Endothelial cell of umbilical vein (primary cell): ENCODE measurements at regions of chr6 and their contacts with region 1.

Region 1: DNA sequence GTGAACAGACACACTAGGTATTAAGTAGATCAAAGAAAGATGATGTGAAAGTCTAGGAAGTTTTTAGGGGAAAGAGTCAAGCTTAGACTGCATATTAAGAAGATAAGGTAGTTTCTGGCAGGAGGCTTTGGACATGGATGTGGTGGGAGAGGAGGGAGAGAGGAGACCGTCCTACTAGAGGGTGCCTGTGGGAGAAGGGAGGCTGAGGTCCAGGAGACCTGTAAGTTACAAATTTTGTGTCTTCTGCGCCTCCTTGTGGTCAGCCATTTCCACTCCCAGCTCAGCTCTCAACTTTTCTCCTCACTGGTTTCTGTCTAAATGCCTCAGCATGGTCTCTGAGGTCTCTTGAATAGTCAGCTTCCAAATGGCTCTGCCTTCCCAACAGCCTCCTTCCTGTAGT is 193.5 kb downstream of the UNC5CL start:
- DNase-seq: peak; percentile 45
- H3K4me3 ChIP-seq: no peak overlapping the region
- H3K27ac ChIP-seq: no peak overlapping the region
- H3K4me1 ChIP-seq: no peaks in the 10 kb centered on the region
- H3K27me3 ChIP-seq: peaks cover 4 to 7% of the 10 kb centered on the region in 2 experiments
- CTCF ChIP-seq: peak; percentile 41 to 72
- POLR2A ChIP-seq: no peak

Region 2: GRCh38 chr6:39347906-39348585 is 1497.5 kb before region 1 on chr6:
- CTCF ChIA-PET with region 1: interaction called, 3 read pairs
- POLR2A ChIA-PET with region 1: no interaction called
- dilution Hi-C with region 1: no loop called
- intact Hi-C with region 1: loop called (anchors 10 kb)
- DNase-seq: peak; percentile 56
- H3K4me3 ChIP-seq: no peak overlapping the region
- H3K27ac ChIP-seq: no peak overlapping the region
- H3K4me1 ChIP-seq: no peaks in the 10 kb centered on the region
- H3K27me3 ChIP-seq: no peaks in the 10 kb centered on the region
- CTCF ChIP-seq: peak; percentile 78 to 87
- POLR2A ChIP-seq: no peak

Region 3: DNA sequence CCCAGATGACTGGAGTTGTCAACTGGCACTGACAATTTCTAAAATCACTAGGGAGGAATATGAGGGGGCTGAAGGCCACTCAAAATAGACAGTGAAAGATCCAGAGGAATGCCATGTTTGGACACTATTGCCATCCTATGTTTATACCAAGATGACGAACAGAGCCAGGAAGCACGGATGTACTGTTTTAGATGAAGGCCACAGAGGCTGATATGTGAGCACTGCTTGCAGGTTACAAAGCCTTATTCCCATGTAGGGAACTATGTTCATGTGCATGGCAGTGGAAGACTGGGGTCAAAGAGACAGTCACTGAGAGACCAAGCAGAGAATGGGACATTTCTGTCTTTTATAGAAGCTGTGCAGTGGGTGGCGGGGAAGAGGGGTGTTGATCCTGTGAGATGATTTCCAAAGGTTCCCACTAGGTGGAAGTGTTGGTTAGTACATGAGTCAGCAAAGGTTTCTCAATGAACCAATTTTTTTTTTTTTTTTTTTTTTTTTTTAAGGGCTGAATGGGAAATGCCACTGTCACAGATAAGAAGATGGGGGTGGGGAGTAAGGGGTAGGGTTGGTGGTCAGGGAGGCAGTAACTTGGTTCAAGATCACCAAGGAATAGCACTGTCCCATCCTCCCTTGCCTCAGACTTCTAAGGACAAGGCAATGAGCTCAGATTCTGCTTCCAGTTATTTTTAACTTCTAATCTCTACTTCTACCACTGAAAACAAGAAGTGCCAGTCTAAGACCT is 864.5 kb before region 1 on chr6:
- CTCF ChIA-PET with region 1: interaction called, 10 read pairs
- POLR2A ChIA-PET with region 1: no interaction called
- dilution Hi-C with region 1: no loop called
- intact Hi-C with region 1: loop called (anchors 1 kb)
- DNase-seq: peak; percentile 30
- H3K4me3 ChIP-seq: no peak overlapping the region
- H3K27ac ChIP-seq: no peak overlapping the region
- H3K4me1 ChIP-seq: no peaks in the 10 kb centered on the region
- H3K27me3 ChIP-seq: no peaks in the 10 kb centered on the region
- CTCF ChIP-seq: peak in 1 of 2 donors; percentile 24
- POLR2A ChIP-seq: no peak

Region 4: GRCh38 chr6:40550202-40551101 is 295.1 kb before region 1 on chr6:
- CTCF ChIA-PET with region 1: interaction called, 19 read pairs
- POLR2A ChIA-PET with region 1: no interaction called
- dilution Hi-C with region 1: no loop called
- intact Hi-C with region 1: loop called (anchors 1 kb)
- DNase-seq: peak; percentile 46
- H3K4me3 ChIP-seq: no peak overlapping the region
- H3K27ac ChIP-seq: no peak overlapping the region
- H3K4me1 ChIP-seq: no peaks in the 10 kb centered on the region
- H3K27me3 ChIP-seq: no peaks in the 10 kb centered on the region
- CTCF ChIP-seq: peak; percentile 56 to 70
- POLR2A ChIP-seq: no peak

Region 5: GRCh38 chr6:40713001-40713960 is 132.3 kb before region 1 on chr6:
- CTCF ChIA-PET with region 1: interaction called, 12 read pairs
- POLR2A ChIA-PET with region 1: no interaction called
- dilution Hi-C with region 1: no loop called
- intact Hi-C with region 1: no loop called
- DNase-seq: no peak
- H3K4me3 ChIP-seq: no peak overlapping the region
- H3K27ac ChIP-seq: no peak overlapping the region
- H3K4me1 ChIP-seq: no peaks in the 10 kb centered on the region
- H3K27me3 ChIP-seq: no peaks in the 10 kb centered on the region
- CTCF ChIP-seq: peak in 1 of 2 donors; percentile 16
- POLR2A ChIP-seq: no peak

Region 6: GRCh38 chr6:40807484-40807883 is 38.1 kb before region 1 on chr6:
- CTCF ChIA-PET with region 1: no interaction called
- POLR2A ChIA-PET with region 1: no interaction called
- dilution Hi-C with region 1: no loop called
- intact Hi-C with region 1: no loop called
- DNase-seq: no peak
- H3K4me3 ChIP-seq: no peak overlapping the region
- H3K27ac ChIP-seq: no peak overlapping the region
- H3K4me1 ChIP-seq: no peaks in the 10 kb centered on the region
- H3K27me3 ChIP-seq: no peaks in the 10 kb centered on the region
- CTCF ChIP-seq: no peak
- POLR2A ChIP-seq: no peak

Region 7: GRCh38 chr6:40831381-40831780 is 14.2 kb before region 1 on chr6:
- CTCF ChIA-PET with region 1: interaction called, 10 read pairs
- POLR2A ChIA-PET with region 1: no interaction called
- dilution Hi-C with region 1: no loop called
- intact Hi-C with region 1: no loop called
- DNase-seq: no peak
- H3K4me3 ChIP-seq: no peak overlapping the region
- H3K27ac ChIP-seq: no peak overlapping the region
- H3K4me1 ChIP-seq: no peaks in the 10 kb centered on the region
- H3K27me3 ChIP-seq: peaks cover under 1 to 7% of the 10 kb centered on the region in 2 experiments
- CTCF ChIP-seq: no peak
- POLR2A ChIP-seq: no peak

Region 8: GRCh38 chr6:41119508-41119907 is 274.0 kb after region 1 on chr6:
- CTCF ChIA-PET with region 1: no interaction called
- POLR2A ChIA-PET with region 1: no interaction called
- dilution Hi-C with region 1: no loop called
- intact Hi-C with region 1: no loop called
- DNase-seq: no peak
- H3K4me3 ChIP-seq: no peak overlapping the region
- H3K27ac ChIP-seq: no peak overlapping the region
- H3K4me1 ChIP-seq: no peaks in the 10 kb centered on the region
- H3K27me3 ChIP-seq: no peaks in the 10 kb centered on the region
- CTCF ChIP-seq: no peak
- POLR2A ChIP-seq: no peak

Region 9: GRCh38 chr6:41182069-41183034 is 336.8 kb after region 1 on chr6:
- CTCF ChIA-PET with region 1: no interaction called
- POLR2A ChIA-PET with region 1: no interaction called
- dilution Hi-C with region 1: no loop called
- intact Hi-C with region 1: no loop called
- DNase-seq: peak; percentile 73
- H3K4me3 ChIP-seq: no peak overlapping the region
- H3K27ac ChIP-seq: no peak overlapping the region
- H3K4me1 ChIP-seq: no peaks in the 10 kb centered on the region
- H3K27me3 ChIP-seq: peaks cover under 1 to 2% of the 10 kb centered on the region in 2 experiments
- CTCF ChIP-seq: peak; percentile 67 to 69
- POLR2A ChIP-seq: no peak